HEK293 (cell line): ENCODE measurements at regions of chr5 and their contacts with region 1.

Region 1: DNA sequence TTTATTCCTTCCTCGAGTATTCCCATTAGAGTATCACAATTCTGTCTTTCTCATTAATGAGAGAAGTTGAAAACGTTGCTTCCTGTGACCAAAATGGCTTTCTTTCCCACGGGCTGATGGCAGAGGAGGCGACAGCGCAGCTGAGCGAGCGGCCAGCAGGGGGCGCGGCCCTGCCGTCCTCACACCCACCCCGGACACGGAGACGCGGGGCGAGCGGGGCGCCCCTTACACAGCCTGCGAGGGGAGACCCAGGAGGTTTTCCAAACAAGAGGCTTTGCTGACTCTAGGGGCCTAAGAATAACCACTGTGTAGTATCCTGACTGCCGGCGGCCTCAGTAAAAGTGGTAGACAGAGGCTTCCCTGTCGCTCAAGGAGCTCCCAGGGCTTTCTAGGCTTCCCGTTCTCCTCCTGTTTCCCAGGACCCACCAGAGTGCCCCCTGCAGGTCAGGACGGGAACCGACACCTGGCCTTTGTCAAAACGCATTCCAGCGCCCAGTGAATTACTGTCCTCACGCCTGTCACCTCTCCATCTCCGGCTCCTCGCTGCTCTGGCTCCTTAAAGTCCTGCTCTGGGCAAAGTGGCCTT is 27.3 kb upstream of the FGF1 start:
- H3K4me3 ChIP-seq: peak overlapping the region; percentile 59
- H3K27ac ChIP-seq: peak overlapping the region; percentile 28; the same call in 1 of the 2 replicates
- H3K4me1 ChIP-seq: no peaks in the 10 kb centered on the region
- CTCF ChIP-seq: peak; percentile 97

Region 2: GRCh38 chr5:142063878-142064331 is 649.3 kb before region 1 on chr5:
- CTCF ChIA-PET with region 1: no interaction called
- POLR2A ChIA-PET with region 1: no interaction called
- H3K4me3 ChIP-seq: no peak overlapping the region
- H3K27ac ChIP-seq: no peak overlapping the region
- H3K4me1 ChIP-seq: no peaks in the 10 kb centered on the region; the same call in 1 of the 2 replicates
- CTCF ChIP-seq: no peak

Region 3: DNA sequence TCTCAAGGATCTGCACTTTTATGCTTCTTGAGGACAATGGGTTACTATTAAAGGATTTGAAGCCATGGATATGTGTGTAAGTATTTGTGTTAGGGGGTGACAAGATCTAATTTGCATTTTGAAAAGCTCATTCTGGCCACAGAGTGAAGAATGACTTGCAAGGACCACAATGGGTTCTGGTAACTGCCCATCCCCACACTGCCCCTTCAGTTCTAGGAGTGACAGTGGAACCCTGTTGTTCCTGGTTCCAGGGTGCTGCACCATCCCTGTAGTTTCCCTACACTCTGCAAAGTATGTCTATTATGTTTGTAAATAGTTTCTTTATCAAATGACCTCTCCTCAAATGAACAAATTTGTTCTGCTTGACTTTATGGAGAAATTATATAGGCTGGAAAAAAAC is 378.7 kb before region 1 on chr5:
- CTCF ChIA-PET with region 1: no interaction called
- POLR2A ChIA-PET with region 1: no interaction called
- H3K4me3 ChIP-seq: no peak overlapping the region
- H3K27ac ChIP-seq: no peak overlapping the region
- H3K4me1 ChIP-seq: no peaks in the 10 kb centered on the region
- CTCF ChIP-seq: no peak

Region 4: GRCh38 chr5:142597546-142598341 is 115.5 kb before region 1 on chr5:
- CTCF ChIA-PET with region 1: interaction called, 14 read pairs
- POLR2A ChIA-PET with region 1: no interaction called
- H3K4me3 ChIP-seq: no peak overlapping the region
- H3K27ac ChIP-seq: no peak overlapping the region
- H3K4me1 ChIP-seq: peaks cover 21% of the 10 kb centered on the region
- CTCF ChIP-seq: no peak

Region 5: GRCh38 chr5:142644640-142645361 is 68.4 kb before region 1 on chr5:
- CTCF ChIA-PET with region 1: interaction called, 17 read pairs
- POLR2A ChIA-PET with region 1: no interaction called
- H3K4me3 ChIP-seq: peak overlapping the region; percentile 21
- H3K27ac ChIP-seq: no peak overlapping the region
- H3K4me1 ChIP-seq: peaks cover 5% of the 10 kb centered on the region; the same call in 1 of the 2 replicates
- CTCF ChIP-seq: no peak

Region 6: DNA sequence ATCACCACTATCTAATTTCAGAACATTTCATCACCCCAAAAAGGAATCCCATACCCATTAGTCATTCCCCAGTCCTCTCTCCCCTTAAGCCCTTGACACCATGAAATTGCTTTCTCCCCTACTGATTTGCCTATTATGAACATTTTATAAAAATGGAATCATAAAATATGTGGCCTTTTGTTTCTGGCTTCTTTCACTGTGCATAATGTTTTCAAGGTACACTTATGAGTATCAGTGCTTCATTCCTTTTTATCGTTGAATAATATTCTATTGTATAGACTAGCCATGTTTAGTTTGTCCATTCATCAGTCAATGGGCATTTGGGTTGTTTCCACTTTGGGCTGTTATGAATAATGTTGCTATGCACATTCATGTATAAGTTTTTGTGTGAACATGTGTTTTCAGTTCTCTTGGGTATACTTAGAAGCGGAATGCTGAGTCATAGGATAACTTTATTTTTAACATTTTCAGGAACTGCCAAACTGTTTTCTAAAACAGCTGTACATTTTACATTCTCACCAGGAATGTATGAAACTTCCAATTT is 13.0 kb after region 1 on chr5:
- CTCF ChIA-PET with region 1: interaction called, 57 read pairs
- POLR2A ChIA-PET with region 1: no interaction called
- H3K4me3 ChIP-seq: no peak overlapping the region
- H3K27ac ChIP-seq: no peak overlapping the region
- H3K4me1 ChIP-seq: no peaks in the 10 kb centered on the region
- CTCF ChIP-seq: no peak

Region 7: DNA sequence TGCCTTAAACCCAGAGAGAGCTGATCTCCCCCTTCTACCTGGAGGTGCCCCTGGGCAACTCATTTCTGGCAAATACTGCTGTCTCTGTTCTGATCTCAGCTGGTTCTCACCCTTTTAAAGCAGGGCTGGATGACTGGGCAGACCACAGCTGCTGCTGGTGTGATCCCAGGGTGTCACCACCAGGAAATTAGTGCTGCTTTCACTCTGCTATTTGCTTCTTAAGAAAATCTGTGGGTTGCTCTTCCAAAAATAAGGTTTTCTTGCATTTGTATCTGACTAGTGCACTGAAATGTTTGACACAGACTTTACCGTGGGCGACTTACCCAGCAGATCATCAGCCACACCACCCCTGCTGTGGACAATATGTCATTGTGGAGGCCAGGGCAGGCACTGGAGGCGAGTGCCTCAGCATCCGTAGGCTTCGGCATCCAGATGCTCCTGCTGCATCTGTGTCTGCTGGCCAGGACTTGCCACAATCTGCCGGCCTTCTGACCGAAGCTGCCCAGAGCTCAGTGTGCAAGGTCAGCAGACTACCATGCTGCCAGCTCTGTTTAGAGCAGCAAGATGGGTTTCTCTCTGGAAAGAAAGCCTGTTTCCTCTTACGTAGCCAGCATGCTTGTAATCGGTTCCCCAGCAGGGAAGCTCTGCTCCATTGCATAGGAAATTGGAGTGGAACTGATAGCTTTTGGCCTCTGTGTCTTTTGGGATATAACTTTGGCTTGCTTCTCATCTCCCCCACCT is 70.6 kb after region 1 on chr5:
- CTCF ChIA-PET with region 1: interaction called, 10 read pairs
- POLR2A ChIA-PET with region 1: no interaction called
- H3K4me3 ChIP-seq: no peak overlapping the region
- H3K27ac ChIP-seq: no peak overlapping the region
- H3K4me1 ChIP-seq: peaks cover 26% of the 10 kb centered on the region
- CTCF ChIP-seq: no peak

Region 8: GRCh38 chr5:142896325-142897007 is 183.3 kb after region 1 on chr5:
- CTCF ChIA-PET with region 1: interaction called, 572 read pairs
- POLR2A ChIA-PET with region 1: no interaction called
- H3K4me3 ChIP-seq: no peak overlapping the region
- H3K27ac ChIP-seq: no peak overlapping the region
- H3K4me1 ChIP-seq: 0 out of 2 replicates have a peak, but pooled peaks cover 4% of the 10 kb centered on the region
- CTCF ChIP-seq: no peak